ENCODE measurements at regions of chr1 and their contacts with region 1.

Region 1: DNA sequence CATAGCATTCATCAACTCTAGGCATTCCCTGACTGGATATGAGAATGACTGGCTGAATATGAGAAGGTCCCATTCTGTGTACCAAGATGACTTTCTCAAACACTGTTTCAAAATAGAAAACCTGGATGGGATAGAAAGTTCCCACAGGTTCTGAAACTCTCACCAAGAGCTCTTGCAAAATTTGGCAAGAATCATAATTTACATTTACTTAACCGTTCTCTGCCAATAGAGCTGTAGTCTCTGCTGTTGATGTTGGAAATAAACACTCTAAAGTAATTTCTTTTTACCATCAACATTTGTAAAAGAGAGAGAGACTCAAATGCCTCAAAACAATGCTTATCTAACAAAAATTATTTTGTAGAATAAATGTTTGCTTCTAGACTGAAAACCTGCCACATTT is 221.1 kb downstream of the LMO4 start:
- DNase-seq: no peak
- H3K4me3 ChIP-seq: no peak overlapping the region
- H3K27me3 ChIP-seq: no peaks in the 10 kb centered on the region
- CTCF ChIP-seq: no peak

Region 2: GRCh38 chr1:87117761-87118368 is 431.9 kb before region 1 on chr1:
- CTCF ChIA-PET with region 1: no interaction called
- POLR2A ChIA-PET with region 1: interaction called, 10 read pairs
- DNase-seq: no peak
- H3K4me3 ChIP-seq: no peak overlapping the region
- H3K27me3 ChIP-seq: no peaks in the 10 kb centered on the region
- CTCF ChIP-seq: no peak